Mammary epithelial cell (primary cell): ENCODE measurements at regions of chr1 and their contacts with region 1.

Region 1: DNA sequence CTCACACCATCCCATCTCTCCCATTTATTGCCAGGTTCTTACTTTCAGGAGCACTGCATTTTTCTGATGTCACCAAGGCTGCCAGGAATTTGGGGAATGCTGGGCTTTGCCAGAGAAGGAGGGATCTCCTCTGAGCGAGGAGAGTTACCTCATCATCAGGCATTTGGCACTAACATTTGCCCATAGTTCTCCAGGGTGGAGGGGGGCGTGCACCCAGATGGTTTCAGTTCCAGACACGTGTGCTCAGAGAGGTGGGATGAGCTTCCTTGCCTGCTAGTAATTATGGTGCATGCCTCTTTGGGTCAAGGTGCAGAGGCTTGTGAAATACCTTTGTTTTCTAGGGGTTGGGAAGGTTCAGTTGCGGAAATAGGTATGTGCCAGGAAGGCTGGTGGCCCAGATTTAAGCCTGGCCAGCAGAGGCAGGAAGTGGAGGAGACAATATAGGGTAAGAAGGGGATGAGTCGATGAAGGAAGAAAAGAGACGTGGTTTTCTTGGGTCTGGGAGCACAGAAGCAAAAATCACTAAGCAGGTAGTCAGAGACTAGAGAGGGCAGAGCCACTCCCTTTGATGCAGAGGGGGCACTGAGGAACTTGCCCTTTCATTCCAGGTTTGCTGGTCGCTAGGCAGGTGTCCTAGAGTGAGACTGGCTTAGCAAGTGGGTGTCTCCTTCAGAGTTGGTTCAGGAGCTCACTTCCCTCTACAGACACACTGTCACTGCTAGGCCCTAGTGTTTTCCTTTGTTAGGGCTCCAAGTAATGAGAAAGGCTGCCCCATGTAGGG is 7.2 kb downstream of the TUFT1 start:
- DNase-seq: peak; percentile 93
- H3K4me3 ChIP-seq: peak overlapping the region in 1 of 3 experiments; percentile 0
- H3K27ac ChIP-seq: peak overlapping the region; percentile 64
- H3K4me1 ChIP-seq: peaks cover 41% of the 10 kb centered on the region
- H3K27me3 ChIP-seq: no peaks in the 10 kb centered on the region
- CTCF ChIP-seq: no peak

Region 2: GRCh38 chr1:151254217-151255213 is 292.8 kb before region 1 on chr1 and contains the start of gene PSMD4:
- CTCF ChIA-PET with region 1: no interaction called
- dilution Hi-C with region 1: no loop called
- in situ Hi-C with region 1: no loop called
- intact Hi-C with region 1: no loop called
- DNase-seq: peak; percentile 97
- H3K4me3 ChIP-seq: peak within 1 kb of the TSS; percentile 60 to 75 (median 72)
- H3K27ac ChIP-seq: peak within 1 kb of the TSS; percentile 70
- H3K4me1 ChIP-seq: peaks cover 9% of the 10 kb centered on the region
- H3K27me3 ChIP-seq: no peaks in the 10 kb centered on the region
- CTCF ChIP-seq: no peak
- total RNA-seq, gene PSMD4: 94.7 to 167 TPM

Region 3: GRCh38 chr1:151568626-151569088 is 21.3 kb after region 1 on chr1:
- CTCF ChIA-PET with region 1: no interaction called
- dilution Hi-C with region 1: no loop called
- in situ Hi-C with region 1: no loop called
- intact Hi-C with region 1: loop called (anchors 2 kb)
- DNase-seq: peak; percentile 82
- H3K4me3 ChIP-seq: no peak overlapping the region
- H3K27ac ChIP-seq: peak overlapping the region; percentile 16
- H3K4me1 ChIP-seq: peaks cover 50% of the 10 kb centered on the region
- H3K27me3 ChIP-seq: no peaks in the 10 kb centered on the region
- CTCF ChIP-seq: no peak